HepG2 (cell line): ENCODE measurements at regions of chr13 and their contacts with region 1.

Region 1: DNA sequence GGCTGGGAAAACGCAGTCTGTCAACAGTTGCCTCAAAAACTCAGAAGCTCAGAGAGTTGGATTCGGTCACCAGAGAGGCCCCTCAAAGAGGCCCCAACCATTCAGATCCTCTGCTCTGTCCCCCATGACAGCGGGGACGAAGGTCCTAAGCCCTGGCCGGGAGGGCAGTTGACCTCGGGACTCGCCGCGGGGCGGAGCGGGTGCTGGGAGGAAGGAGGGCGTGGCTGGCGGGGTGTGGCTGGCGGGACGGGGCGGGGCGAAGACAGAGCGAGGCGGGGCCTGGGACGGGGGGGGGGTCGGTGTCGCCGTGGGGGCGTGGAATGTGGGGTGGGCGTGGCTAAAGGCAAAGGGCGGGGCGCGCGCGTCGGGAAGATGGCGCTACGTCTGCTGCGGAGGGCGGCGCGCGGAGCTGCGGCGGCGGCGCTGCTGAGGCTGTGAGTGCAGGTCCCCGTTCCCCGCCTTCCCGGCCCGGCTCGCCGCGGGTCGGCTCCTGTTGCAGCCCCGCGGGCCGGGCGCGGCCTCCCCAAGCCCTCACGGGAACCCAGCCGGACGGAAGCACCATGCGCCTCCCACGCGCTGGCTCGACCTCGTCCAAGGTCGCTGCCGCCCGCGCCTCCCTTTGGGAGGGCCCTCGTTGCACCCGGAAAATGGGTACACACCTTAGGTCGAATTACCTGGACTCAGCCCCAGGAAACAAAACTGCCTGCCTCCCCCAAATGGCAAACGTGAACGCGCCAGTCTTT is 105.2 kb downstream of the TM9SF2 start:
- DNase-seq: peak; percentile 89
- ATAC-seq: peak; percentile 96
- H3K4me3 ChIP-seq: peak within 1 kb of the TSS; percentile 69 to 87 (median 69)
- H3K27ac ChIP-seq: peak within 1 kb of the TSS; percentile 96
- H3K4me1 ChIP-seq: peaks cover 31% of the 10 kb centered on the region
- H3K27me3 ChIP-seq: no peaks in the 10 kb centered on the region; a peak in 1 of 5 replicates
- CTCF ChIP-seq: peak; percentile 46
- EP300 ChIP-seq: 0 out of 4 replicates have a peak, but pooled peaks of 1 of the 2 experiments have one; percentile 17
- POLR2A ChIP-seq: peak; percentile 76 to 93
- RAD21 ChIP-seq: peak; percentile 62

Region 2: GRCh38 chr13:99467764-99468163 is 138.7 kb before region 1 on chr13:
- CTCF ChIA-PET with region 1: no interaction called
- POLR2A ChIA-PET with region 1: no interaction called
- in situ Hi-C with region 1: no loop called
- intact Hi-C with region 1: no loop called
- DNase-seq: no peak
- ATAC-seq: no peak
- H3K4me3 ChIP-seq: no peak overlapping the region
- H3K27ac ChIP-seq: no peak overlapping the region
- H3K4me1 ChIP-seq: no peaks in the 10 kb centered on the region
- H3K27me3 ChIP-seq: peaks cover 0 to 10% of the 10 kb centered on the region in 2 experiments; a peak in 2 of 5 replicates
- CTCF ChIP-seq: no peak
- EP300 ChIP-seq: no peak
- POLR2A ChIP-seq: no peak
- RAD21 ChIP-seq: no peak

Region 3: GRCh38 chr13:99558570-99559180 is 47.8 kb before region 1 on chr13:
- CTCF ChIA-PET with region 1: no interaction called
- POLR2A ChIA-PET with region 1: interaction called, 19 read pairs
- in situ Hi-C with region 1: no loop called
- intact Hi-C with region 1: loop called (anchors 2 kb)
- DNase-seq: peak; percentile 54
- ATAC-seq: no peak; the same call in none of the 3 replicates
- H3K4me3 ChIP-seq: no peak overlapping the region
- H3K27ac ChIP-seq: peak overlapping the region; percentile 82
- H3K4me1 ChIP-seq: peaks cover 49% of the 10 kb centered on the region
- H3K27me3 ChIP-seq: no peaks in the 10 kb centered on the region
- CTCF ChIP-seq: no peak
- EP300 ChIP-seq: peak in 1 of 2 experiments; percentile 73; a peak in 2 of 4 replicates
- POLR2A ChIP-seq: no peak
- RAD21 ChIP-seq: no peak

Region 4: GRCh38 chr13:99577934-99578917 is 28.3 kb before region 1 on chr13:
- CTCF ChIA-PET with region 1: no interaction called
- POLR2A ChIA-PET with region 1: interaction called, 14 read pairs
- in situ Hi-C with region 1: no loop called
- intact Hi-C with region 1: loop called (anchors 5 kb)
- DNase-seq: peak; percentile 47
- ATAC-seq: peak; percentile 85
- H3K4me3 ChIP-seq: peak overlapping the region in 2 of 3 experiments; percentile 24 to 33; a peak in 2 of 6 replicates
- H3K27ac ChIP-seq: no peak overlapping the region
- H3K4me1 ChIP-seq: peaks cover 40% of the 10 kb centered on the region
- H3K27me3 ChIP-seq: no peaks in the 10 kb centered on the region
- CTCF ChIP-seq: peak; percentile 50
- EP300 ChIP-seq: no peak
- POLR2A ChIP-seq: no peak
- RAD21 ChIP-seq: no peak